ENCODE measurements at regions of chr12 and their contacts with region 1.

Region 1: DNA sequence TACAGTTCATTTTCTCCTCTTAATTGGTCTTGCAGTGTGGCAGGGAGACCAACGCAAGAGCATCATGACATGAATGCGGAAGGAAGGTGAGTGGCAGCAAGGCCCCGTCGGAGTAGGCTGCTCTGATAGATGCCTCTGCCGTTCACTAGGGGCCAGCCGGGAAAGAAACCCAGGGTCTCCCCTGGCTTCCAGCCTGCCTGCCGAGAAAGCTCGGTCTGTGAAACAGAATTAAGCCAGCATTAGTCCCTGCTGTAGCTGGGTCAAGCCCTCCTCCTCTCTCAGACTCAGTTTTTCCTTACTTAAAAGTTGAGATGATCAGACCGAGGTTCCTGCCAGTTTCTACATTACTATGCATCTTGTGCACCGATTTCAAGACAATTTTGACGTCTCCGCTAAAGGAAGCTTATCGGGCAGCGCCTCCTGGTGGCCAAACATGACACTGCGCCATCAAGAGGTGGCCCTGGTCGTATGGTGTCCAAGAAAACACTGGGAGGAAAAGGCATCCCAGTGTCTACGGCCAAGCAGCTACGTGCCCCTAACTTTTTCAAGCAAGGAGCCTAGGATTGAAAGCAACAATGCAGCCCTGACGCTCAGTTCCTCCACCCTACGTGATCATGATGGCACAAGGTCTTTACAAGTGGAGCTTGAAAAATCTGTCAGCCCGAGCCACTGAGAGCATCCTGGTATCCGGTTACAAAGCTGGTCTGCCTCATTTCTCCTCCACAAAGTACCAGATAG is 131.6 kb downstream of the KSR2 start:
- DNase-seq: peak; percentile 87
- H3K4me3 ChIP-seq: peak overlapping the region in 1 of 8 donors; percentile 11
- H3K27ac ChIP-seq: no peak overlapping the region
- H3K4me1 ChIP-seq: peaks cover 0 to 8% (median 1%) of the 10 kb centered on the region in 6 donors
- H3K27me3 ChIP-seq: peaks cover 0 to 51% (median 4%) of the 10 kb centered on the region in 7 donors
- CTCF ChIP-seq: peak; percentile 66 to 92 (median 84)
- POLR2A ChIP-seq: no peak

Region 2: DNA sequence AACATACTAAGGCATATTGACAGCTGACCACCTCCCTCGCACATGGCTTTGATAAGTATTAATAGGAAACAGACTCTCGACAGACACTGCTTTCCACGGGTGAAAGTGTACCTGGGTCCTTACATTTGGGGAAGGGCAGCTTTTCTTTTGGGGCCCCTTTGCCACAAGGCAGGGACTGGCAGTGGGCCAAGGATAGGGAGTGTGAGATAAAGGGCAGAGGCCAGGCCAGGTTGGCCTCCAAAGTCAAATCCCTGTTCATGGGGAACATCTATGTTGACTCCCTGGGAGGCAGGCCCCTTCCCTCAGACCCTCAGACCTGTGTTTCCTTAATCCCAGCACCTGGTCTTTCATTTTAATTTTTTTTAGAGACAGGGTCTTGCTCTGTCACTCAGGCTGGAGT is 627.5 kb before region 1 on chr12:
- intact Hi-C with region 1: loop called (anchors 2 kb)
- DNase-seq: no peak
- H3K4me3 ChIP-seq: no peak overlapping the region
- H3K27ac ChIP-seq: no peak overlapping the region
- H3K4me1 ChIP-seq: no peaks in the 10 kb centered on the region
- H3K27me3 ChIP-seq: peaks cover 0 to 36% (median 0%) of the 10 kb centered on the region in 7 donors
- CTCF ChIP-seq: no peak
- POLR2A ChIP-seq: no peak

Region 3: GRCh38 chr12:117367011-117367638 is 470.0 kb before region 1 on chr12:
- intact Hi-C with region 1: loop called (anchors 2 kb)
- DNase-seq: no peak
- H3K4me3 ChIP-seq: no peak overlapping the region
- H3K27ac ChIP-seq: no peak overlapping the region
- H3K4me1 ChIP-seq: no peaks in the 10 kb centered on the region
- H3K27me3 ChIP-seq: peaks cover 0 to 57% (median 11%) of the 10 kb centered on the region in 7 donors
- CTCF ChIP-seq: peak; percentile 18 to 88 (median 71)
- POLR2A ChIP-seq: no peak

Region 4: GRCh38 chr12:117533704-117534103 is 303.5 kb before region 1 on chr12:
- intact Hi-C with region 1: no loop called
- DNase-seq: no peak
- H3K4me3 ChIP-seq: no peak overlapping the region
- H3K27ac ChIP-seq: no peak overlapping the region
- H3K4me1 ChIP-seq: no peaks in the 10 kb centered on the region
- H3K27me3 ChIP-seq: peaks cover 0 to 15% (median 0%) of the 10 kb centered on the region in 7 donors
- CTCF ChIP-seq: no peak
- POLR2A ChIP-seq: no peak

Measured in spleen (tissue), 13 donors.